Activated T-helper 2 cell treated with anti-CD3 and anti-CD28 coated beads, Interferon-gamma antibody, Interleukin-2, Interleukin-4, amounts not matched to agents 10 μg/mL and 5 μg/mL and 100 μg/mL, durations not matched to agents 14 hours and 24 hours and 36 hours (primary cell): ENCODE measurements at regions of chr2 and their contacts with region 1.

Region 1: DNA sequence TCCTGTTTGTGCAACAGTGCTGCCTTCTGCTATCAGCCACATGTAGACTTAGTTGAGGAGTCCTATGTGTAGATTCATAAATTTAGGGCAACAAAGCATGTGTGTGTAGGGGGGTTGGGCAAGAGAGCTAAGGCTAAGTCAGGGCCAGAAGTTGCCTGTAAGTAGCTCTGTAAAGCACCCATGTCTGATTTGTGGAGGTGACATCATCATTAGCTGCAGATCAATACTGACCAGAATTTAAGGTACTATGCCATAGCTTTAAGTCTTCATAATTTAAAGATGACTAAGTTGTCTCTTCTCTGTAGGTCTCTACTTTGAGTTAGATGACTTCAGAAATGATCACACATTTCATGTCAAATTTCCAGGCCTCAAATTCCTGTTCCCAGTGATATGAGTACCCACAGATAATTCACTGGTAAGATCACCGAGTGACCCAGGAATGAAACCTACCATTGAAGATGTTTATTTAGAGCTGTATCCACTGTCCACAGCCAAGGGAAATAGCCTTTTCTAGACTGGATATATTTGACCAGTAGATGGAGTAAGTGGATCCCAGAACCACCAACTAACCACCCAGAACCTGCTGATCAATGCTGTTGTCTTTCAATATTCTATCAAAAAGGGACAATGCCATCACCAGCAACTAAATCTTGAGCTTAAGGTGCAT is 239.0 kb downstream of the SLC8A1 start:
- DNase-seq: no peak
- H3K4me3 Mint-ChIP-seq: no peak overlapping the region
- H3K27ac Mint-ChIP-seq: no peak overlapping the region
- H3K4me1 Mint-ChIP-seq: peaks cover 29% of the 10 kb centered on the region
- H3K27me3 Mint-ChIP-seq: no peaks in the 10 kb centered on the region

Region 2: DNA sequence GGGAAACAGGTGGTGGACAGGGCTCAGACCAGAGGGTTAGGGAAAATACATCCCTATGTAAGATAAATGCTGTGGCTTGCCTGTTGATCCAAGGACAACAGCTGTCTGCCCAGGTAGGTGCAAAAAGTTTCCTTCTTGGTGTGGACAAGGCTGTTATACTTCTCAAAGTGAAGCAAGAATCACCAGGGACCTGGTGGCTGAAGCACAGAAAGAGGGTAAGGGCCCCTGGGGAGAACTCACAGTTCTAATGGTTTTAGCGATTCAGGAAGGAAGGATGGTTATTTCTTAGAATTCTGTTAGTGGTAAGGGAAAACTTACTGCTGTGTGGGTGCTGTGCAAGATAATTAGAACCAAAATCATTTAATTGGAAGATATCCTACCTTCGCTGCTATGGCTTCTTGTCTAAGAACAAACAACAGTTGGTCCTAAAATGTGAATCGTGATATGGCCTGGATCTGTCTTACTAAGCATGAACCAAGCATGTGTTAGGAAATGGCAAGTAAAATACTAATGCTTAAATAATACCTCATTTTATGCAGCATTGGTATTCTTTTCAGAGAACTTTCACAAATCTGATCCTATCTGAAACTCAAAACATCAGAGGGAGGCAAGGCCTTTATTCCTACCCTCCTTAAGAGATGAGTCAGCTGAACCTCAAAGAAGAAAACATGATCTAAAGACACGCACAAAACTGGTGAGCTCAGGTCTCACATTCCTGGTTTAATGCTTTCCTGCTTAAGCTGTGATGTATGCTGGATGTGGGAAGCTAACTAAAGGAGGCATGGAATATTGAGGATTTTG is 274.7 kb before region 1 on chr2:
- intact Hi-C with region 1: loop called (anchors 2 kb)
- DNase-seq: no peak
- H3K4me3 Mint-ChIP-seq: peak overlapping the region; percentile 79
- H3K27ac Mint-ChIP-seq: peak overlapping the region; percentile 98
- H3K4me1 Mint-ChIP-seq: peaks cover 68% of the 10 kb centered on the region
- H3K27me3 Mint-ChIP-seq: no peaks in the 10 kb centered on the region

Region 3: GRCh38 chr2:39996653-39997080 is 216.3 kb before region 1 on chr2:
- intact Hi-C with region 1: loop called (anchors 1 kb)
- DNase-seq: no peak
- H3K4me3 Mint-ChIP-seq: no peak overlapping the region
- H3K27ac Mint-ChIP-seq: peak overlapping the region; percentile 87
- H3K4me1 Mint-ChIP-seq: peaks cover 47% of the 10 kb centered on the region
- H3K27me3 Mint-ChIP-seq: no peaks in the 10 kb centered on the region

Region 4: GRCh38 chr2:40032650-40033319 is 180.2 kb before region 1 on chr2:
- intact Hi-C with region 1: loop called (anchors 1 kb)
- DNase-seq: no peak
- H3K4me3 Mint-ChIP-seq: no peak overlapping the region
- H3K27ac Mint-ChIP-seq: peak overlapping the region; percentile 75
- H3K4me1 Mint-ChIP-seq: peaks cover 45% of the 10 kb centered on the region
- H3K27me3 Mint-ChIP-seq: no peaks in the 10 kb centered on the region

Region 5: GRCh38 chr2:40554668-40555285 is 341.8 kb after region 1 on chr2:
- intact Hi-C with region 1: loop called (anchors 10 kb)
- DNase-seq: peak; percentile 37
- H3K4me3 Mint-ChIP-seq: no peak overlapping the region
- H3K27ac Mint-ChIP-seq: no peak overlapping the region
- H3K4me1 Mint-ChIP-seq: peaks cover 2% of the 10 kb centered on the region
- H3K27me3 Mint-ChIP-seq: peaks cover 7% of the 10 kb centered on the region